ENCODE measurements at regions of chr3 and their contacts with region 1.

Region 1: GRCh38 chr3:141402476-141403171 is 34.3 kb downstream of the ZBTB38 start:
- DNase-seq: peak; percentile 35 to 62 (median 51)
- ATAC-seq: peak; percentile 70
- H3K4me3 ChIP-seq: peak overlapping the region; percentile 80
- H3K4me3 Mint-ChIP-seq: peak overlapping the region; percentile 83 to 96 (median 92)
- H3K27ac ChIP-seq: peak overlapping the region; percentile 94
- H3K27ac Mint-ChIP-seq: peak overlapping the region; percentile 75 to 97 (median 94)
- H3K4me1 ChIP-seq: peaks cover 14 to 48% of the 10 kb centered on the region in 2 donors
- H3K4me1 Mint-ChIP-seq: peaks cover 20 to 69% (median 46%) of the 10 kb centered on the region in 7 donors
- H3K27me3 ChIP-seq: no peaks in the 10 kb centered on the region
- H3K27me3 Mint-ChIP-seq: no peaks in the 10 kb centered on the region

Region 2: DNA sequence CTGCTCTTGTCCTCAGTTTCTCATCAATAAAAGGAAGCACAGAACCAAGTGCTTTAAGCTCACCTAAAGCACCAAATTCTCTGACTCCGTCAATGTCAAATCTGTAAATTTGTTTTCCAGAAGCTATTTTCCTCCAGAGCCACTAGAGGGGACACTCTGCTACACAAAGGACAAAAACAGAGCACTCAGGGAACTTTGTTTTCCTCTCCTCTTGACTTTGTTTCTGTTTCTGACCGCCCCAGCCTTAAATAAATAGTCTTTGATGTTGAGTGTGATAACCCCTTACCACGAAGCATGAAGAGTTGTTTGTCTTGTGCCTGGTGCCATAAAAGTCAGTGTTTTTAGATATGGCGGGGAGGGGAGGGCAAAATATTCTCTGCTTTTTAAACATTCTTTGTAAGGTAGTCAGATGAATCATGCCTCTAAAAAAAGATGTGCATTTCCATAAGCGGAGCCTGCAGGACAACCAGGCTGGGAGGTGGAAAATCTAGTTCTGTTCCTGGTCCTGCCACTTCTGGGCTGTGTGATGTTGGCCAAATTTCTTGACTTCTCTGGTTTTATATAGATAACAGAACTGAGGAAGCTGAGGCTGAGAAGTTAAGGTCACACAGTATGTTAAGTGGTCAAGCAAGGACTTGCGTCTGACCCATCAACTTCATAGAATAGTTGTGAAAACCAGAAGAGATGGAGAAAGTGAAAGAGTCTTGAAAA is 41.6 kb before region 1 on chr3:
- CTCF ChIA-PET with region 1: interaction called, 3 read pairs
- POLR2A ChIA-PET with region 1: no interaction called
- intact Hi-C with region 1: loop called in 1 of 2 experiments (anchors 2 kb)
- DNase-seq: peak in 7 of 9 donors; percentile 20 to 56 (median 45)
- ATAC-seq: peak; percentile 83
- H3K4me3 ChIP-seq: no peak overlapping the region
- H3K4me3 Mint-ChIP-seq: peak overlapping the region in 4 of 10 donors; percentile 16 to 40 (median 28)
- H3K27ac ChIP-seq: no peak overlapping the region
- H3K27ac Mint-ChIP-seq: peak overlapping the region in 2 of 9 donors; percentile 26 to 51
- H3K4me1 ChIP-seq: no peaks in the 10 kb centered on the region
- H3K4me1 Mint-ChIP-seq: peaks cover 5 to 9% (median 7%) of the 10 kb centered on the region in 7 donors
- H3K27me3 ChIP-seq: no peaks in the 10 kb centered on the region
- H3K27me3 Mint-ChIP-seq: peaks cover 0 to 11% (median 0%) of the 10 kb centered on the region in 5 donors

Region 3: DNA sequence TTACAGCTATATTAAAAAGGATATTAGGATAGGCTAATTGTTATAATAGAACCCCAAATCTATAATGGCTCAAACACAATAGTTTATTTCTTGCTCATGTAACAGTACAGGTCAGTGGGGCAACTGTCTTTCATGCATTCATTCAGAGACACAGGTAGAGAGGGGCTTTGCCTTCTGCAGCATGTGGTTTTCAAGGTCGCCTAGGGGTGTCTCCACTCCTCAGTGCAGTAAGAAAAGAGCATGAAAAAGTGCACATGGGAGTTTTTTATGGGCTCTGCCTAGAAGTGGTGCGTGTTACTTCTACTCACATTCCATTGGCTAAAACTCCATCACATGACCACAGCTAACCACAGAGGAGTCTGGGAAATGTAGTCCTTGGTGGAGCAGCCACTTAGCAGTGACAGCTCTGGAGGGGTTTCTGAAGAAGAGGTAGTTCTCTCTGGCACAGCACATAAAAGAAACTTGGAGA is 32.5 kb before region 1 on chr3:
- CTCF ChIA-PET with region 1: no interaction called
- POLR2A ChIA-PET with region 1: interaction called, 3 read pairs
- intact Hi-C with region 1: loop called (anchors 1 kb)
- DNase-seq: peak; percentile 17 to 90 (median 81)
- ATAC-seq: peak; percentile 99
- H3K4me3 ChIP-seq: no peak overlapping the region
- H3K4me3 Mint-ChIP-seq: no peak overlapping the region
- H3K27ac ChIP-seq: no peak overlapping the region
- H3K27ac Mint-ChIP-seq: peak overlapping the region in 6 of 9 donors; percentile 13 to 76 (median 46)
- H3K4me1 ChIP-seq: no peaks in the 10 kb centered on the region
- H3K4me1 Mint-ChIP-seq: peaks cover 4 to 17% (median 7%) of the 10 kb centered on the region in 7 donors
- H3K27me3 ChIP-seq: no peaks in the 10 kb centered on the region
- H3K27me3 Mint-ChIP-seq: peaks cover 0 to 3% (median 0%) of the 10 kb centered on the region in 5 donors

Region 4: DNA sequence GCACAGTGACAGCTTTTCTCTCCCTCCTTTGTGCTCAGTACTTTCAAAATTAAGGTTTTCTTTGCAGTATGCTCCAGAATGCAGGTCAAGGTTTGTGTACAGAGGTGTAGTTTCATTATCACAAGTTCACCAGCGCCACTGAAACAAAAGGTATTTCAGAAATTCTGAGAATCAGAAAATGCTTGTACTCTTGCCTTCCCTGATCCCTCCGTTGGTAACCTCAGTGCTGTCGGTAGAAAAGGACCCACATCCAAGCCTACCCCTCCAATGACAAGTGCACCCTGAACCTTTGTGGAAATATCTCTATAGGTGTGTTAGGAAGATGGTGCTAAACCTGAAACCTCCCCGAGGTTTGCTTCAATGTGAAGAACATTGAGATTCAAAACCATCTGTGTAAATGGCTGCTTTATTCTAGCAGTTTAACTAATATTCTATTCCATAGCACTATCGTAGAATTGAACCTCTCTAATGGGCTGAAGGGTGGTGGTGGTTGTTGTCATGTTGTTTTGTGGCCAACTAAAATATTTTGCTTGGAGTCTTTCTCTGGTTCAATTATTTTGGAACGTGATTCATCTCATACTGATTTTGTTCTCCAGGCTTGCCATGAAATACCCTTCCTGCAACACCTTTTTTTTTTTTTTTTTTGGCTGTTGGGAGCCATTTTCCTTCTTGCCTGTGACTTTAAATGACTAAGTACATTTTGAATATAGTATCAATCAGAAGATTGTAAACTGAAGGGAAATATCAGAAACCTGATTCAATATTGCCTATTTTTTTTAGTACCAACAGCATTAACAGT is 13.6 kb before region 1 on chr3:
- CTCF ChIA-PET with region 1: no interaction called
- POLR2A ChIA-PET with region 1: interaction called, 6 read pairs
- intact Hi-C with region 1: loop called in 1 of 2 experiments (anchors 2 kb)
- DNase-seq: no peak
- ATAC-seq: no peak
- H3K4me3 ChIP-seq: peak overlapping the region; percentile 12
- H3K4me3 Mint-ChIP-seq: peak overlapping the region in 7 of 10 donors; percentile 14 to 67 (median 48)
- H3K27ac ChIP-seq: no peak overlapping the region
- H3K27ac Mint-ChIP-seq: peak overlapping the region in 3 of 9 donors; percentile 7 to 72 (median 34)
- H3K4me1 ChIP-seq: peaks cover 0 to 4% of the 10 kb centered on the region in 2 donors
- H3K4me1 Mint-ChIP-seq: peaks cover 0 to 13% (median 4%) of the 10 kb centered on the region in 7 donors
- H3K27me3 ChIP-seq: no peaks in the 10 kb centered on the region
- H3K27me3 Mint-ChIP-seq: peaks cover 0 to 39% (median 0%) of the 10 kb centered on the region in 5 donors

Region 5: DNA sequence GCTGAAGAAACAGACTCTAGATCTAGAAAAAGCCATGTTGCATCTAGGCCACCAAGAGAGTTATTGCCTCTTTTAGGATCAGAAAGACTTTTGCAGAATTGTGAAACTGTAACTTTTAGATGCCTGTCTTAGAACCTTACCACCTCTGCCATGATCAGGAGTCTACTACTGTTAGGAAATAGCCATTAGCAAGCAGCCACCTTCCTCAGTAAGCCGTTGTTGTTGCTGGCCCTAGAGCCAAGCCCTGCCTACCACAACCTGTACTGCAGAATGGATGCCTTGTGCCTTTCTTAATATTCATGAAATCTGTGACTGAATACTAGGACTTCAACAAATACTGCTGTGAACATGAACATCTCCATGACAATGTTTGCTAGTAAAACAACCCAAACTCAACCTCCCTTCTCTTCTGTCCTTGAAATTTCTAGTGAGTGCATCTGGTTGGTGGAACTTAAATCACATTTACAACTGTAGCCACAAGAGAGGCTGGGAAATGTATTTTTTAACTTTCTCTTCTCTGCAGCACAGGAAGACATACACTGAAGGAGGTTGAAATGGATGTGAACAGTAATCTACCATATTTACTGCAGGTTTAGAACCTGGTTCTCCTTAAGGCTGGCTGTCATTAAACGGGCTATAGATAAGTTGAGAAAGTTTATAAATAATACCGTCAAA is 104.9 kb after region 1 on chr3:
- CTCF ChIA-PET with region 1: no interaction called
- POLR2A ChIA-PET with region 1: no interaction called
- intact Hi-C with region 1: no loop called
- DNase-seq: no peak
- ATAC-seq: peak; percentile 54
- H3K4me3 ChIP-seq: no peak overlapping the region
- H3K4me3 Mint-ChIP-seq: peak overlapping the region; percentile 27 to 72 (median 52)
- H3K27ac ChIP-seq: peak overlapping the region; percentile 2
- H3K27ac Mint-ChIP-seq: peak overlapping the region in 8 of 9 donors; percentile 44 to 86 (median 72)
- H3K4me1 ChIP-seq: peaks cover 50 to 92% of the 10 kb centered on the region in 2 donors
- H3K4me1 Mint-ChIP-seq: peaks cover 37 to 57% (median 55%) of the 10 kb centered on the region in 7 donors
- H3K27me3 ChIP-seq: no peaks in the 10 kb centered on the region
- H3K27me3 Mint-ChIP-seq: no peaks in the 10 kb centered on the region

Region 6: GRCh38 chr3:141575879-141576743 is 173.5 kb after region 1 on chr3:
- CTCF ChIA-PET with region 1: no interaction called
- POLR2A ChIA-PET with region 1: no interaction called
- intact Hi-C with region 1: no loop called
- DNase-seq: peak in 4 of 9 donors; percentile 14 to 44 (median 41)
- ATAC-seq: peak; percentile 82
- H3K4me3 ChIP-seq: no peak overlapping the region
- H3K4me3 Mint-ChIP-seq: peak overlapping the region in 8 of 10 donors; percentile 7 to 64 (median 48)
- H3K27ac ChIP-seq: peak overlapping the region; percentile 47
- H3K27ac Mint-ChIP-seq: peak overlapping the region; percentile 36 to 88 (median 69)
- H3K4me1 ChIP-seq: no peaks in the 10 kb centered on the region
- H3K4me1 Mint-ChIP-seq: peaks cover 8 to 17% (median 12%) of the 10 kb centered on the region in 7 donors
- H3K27me3 ChIP-seq: no peaks in the 10 kb centered on the region
- H3K27me3 Mint-ChIP-seq: no peaks in the 10 kb centered on the region

Measured in naive thymus-derived CD4-positive, alpha-beta T cell (primary cell).